ENCODE measurements at regions of chr7 and their contacts with region 1.

Region 1: GRCh38 chr7:48312151-48312550 is 140.9 kb downstream of the ABCA13 start:
- DNase-seq: no peak
- ATAC-seq: no peak
- H3K4me3 ChIP-seq: no peak overlapping the region
- H3K27ac ChIP-seq: no peak overlapping the region
- H3K4me1 ChIP-seq: no peaks in the 10 kb centered on the region
- H3K27me3 ChIP-seq: no peaks in the 10 kb centered on the region
- CTCF ChIP-seq: no peak
- POLR2A ChIP-seq: no peak
- RAD21 ChIP-seq: no peak

Region 2: GRCh38 chr7:48299580-48300169 is 12.5 kb before region 1 on chr7:
- CTCF ChIA-PET with region 1: interaction called, 10 read pairs
- POLR2A ChIA-PET with region 1: no interaction called
- dilution Hi-C with region 1: no loop called
- in situ Hi-C with region 1: no loop called
- intact Hi-C with region 1: no loop called
- DNase-seq: peak; percentile 80
- ATAC-seq: peak; percentile 95
- H3K4me3 ChIP-seq: no peak overlapping the region
- H3K27ac ChIP-seq: no peak overlapping the region
- H3K4me1 ChIP-seq: peaks cover 4% of the 10 kb centered on the region
- H3K27me3 ChIP-seq: no peaks in the 10 kb centered on the region
- CTCF ChIP-seq: peak; percentile 82
- POLR2A ChIP-seq: 0 out of 2 replicates have a peak, but pooled peaks have one; percentile 25
- RAD21 ChIP-seq: peak; percentile 88

Measured in IMR-90 (cell line).